PC-9 (cell line): ENCODE measurements at regions of chr11 and their contacts with region 1.

Region 1: DNA sequence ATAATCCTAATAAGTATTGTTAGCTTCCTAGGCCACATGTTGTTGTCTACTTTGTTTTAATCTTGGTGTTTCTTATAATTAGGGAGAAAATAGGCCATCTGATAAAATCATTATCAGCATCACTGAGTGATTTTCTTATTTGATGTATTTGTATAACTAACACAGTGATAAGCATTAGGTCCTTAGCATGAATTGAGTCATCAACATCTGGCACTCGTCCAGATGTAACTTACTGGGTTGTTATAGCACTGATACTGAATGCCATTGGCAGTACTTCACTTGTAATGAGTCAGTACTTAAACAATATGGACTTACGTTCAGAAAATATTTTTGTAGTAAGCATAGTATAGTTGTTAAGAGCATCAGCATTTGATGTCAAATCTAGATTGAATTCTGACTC is 16.2 kb downstream of the API5 start:
- DNase-seq: peak in 1 of 2 experiments; percentile 71
- H3K4me3 ChIP-seq: no peak overlapping the region
- H3K27ac ChIP-seq: no peak overlapping the region
- H3K4me1 ChIP-seq: no peaks in the 10 kb centered on the region
- H3K27me3 ChIP-seq: no peaks in the 10 kb centered on the region
- CTCF ChIP-seq: no peak

Region 2: DNA sequence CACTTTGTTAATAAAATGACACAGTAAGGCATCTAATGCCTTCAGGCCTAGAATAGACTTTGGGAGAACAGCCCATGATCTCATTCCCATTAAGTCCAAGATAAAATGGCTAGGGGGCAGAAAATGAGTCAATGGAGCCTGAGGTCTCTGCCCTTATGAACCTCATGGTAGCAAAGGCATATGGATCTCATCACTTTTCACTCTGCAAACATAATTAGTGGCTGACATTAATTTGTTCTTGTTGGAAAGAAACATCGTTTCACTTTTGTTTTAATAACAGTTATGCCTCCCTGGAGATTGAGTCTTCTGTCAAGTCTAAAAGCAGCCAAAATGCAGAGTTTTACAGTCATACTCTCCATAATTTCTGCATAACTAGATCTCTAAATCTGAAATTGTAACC is 128.0 kb before region 1 on chr11:
- CTCF ChIA-PET with region 1: no interaction called
- POLR2A ChIA-PET with region 1: no interaction called
- intact Hi-C with region 1: no loop called
- DNase-seq: no peak
- H3K4me3 ChIP-seq: no peak overlapping the region
- H3K27ac ChIP-seq: no peak overlapping the region
- H3K4me1 ChIP-seq: no peaks in the 10 kb centered on the region
- H3K27me3 ChIP-seq: no peaks in the 10 kb centered on the region
- CTCF ChIP-seq: no peak

Region 3: GRCh38 chr11:43381802-43382201 is 53.8 kb after region 1 on chr11:
- CTCF ChIA-PET with region 1: no interaction called
- POLR2A ChIA-PET with region 1: no interaction called
- intact Hi-C with region 1: loop called (anchors 10 kb)
- DNase-seq: no peak
- H3K4me3 ChIP-seq: no peak overlapping the region
- H3K27ac ChIP-seq: no peak overlapping the region
- H3K4me1 ChIP-seq: peaks cover 1% of the 10 kb centered on the region; the same call in 1 of the 2 replicates
- H3K27me3 ChIP-seq: no peaks in the 10 kb centered on the region
- CTCF ChIP-seq: no peak

Region 4: DNA sequence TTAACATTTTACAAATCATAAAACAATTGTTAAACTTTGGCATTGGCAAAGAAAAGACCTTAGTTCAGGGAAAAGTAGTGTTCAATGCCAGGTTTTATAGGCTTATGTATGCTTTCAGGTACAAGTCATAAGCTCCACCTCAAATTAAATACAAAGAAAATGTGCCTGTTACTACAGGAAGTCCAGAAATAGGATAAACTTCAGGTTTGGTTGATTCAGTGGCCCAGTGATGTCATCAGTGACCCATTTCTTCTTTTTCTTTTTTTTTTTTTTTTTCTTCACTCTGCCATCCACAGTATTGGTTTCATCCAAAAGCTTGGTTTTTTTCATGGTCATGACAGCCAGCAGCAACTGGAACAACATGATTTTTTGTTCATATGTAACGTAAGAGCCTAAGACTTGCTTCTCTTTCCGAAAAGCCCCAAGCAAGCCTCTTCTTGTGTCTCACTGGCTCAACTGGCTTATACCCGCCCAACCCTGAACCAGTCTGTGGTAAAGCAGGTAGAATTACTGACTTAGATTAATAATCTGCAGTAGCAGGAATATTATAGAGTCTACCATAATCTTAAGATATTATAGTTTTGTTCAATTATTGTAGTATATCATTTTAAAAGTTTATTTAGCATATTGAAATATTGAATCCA is 77.0 kb after region 1 on chr11:
- CTCF ChIA-PET with region 1: no interaction called
- POLR2A ChIA-PET with region 1: no interaction called
- intact Hi-C with region 1: loop called (anchors 5 kb)
- DNase-seq: no peak
- H3K4me3 ChIP-seq: no peak overlapping the region
- H3K27ac ChIP-seq: no peak overlapping the region
- H3K4me1 ChIP-seq: no peaks in the 10 kb centered on the region
- H3K27me3 ChIP-seq: no peaks in the 10 kb centered on the region
- CTCF ChIP-seq: no peak